ENCODE measurements at regions of chr16 and their contacts with region 1.

Region 1: GRCh38 chr16:88442727-88443576 is 10.1 kb upstream of the ZFPM1 start:
- DNase-seq: peak; percentile 67
- H3K4me3 Mint-ChIP-seq: no peak overlapping the region
- H3K27ac Mint-ChIP-seq: no peak overlapping the region
- H3K4me1 Mint-ChIP-seq: peaks cover 3% of the 10 kb centered on the region
- H3K27me3 Mint-ChIP-seq: peaks cover 7% of the 10 kb centered on the region

Region 2: GRCh38 chr16:88527186-88527936 is 84.4 kb after region 1 on chr16:
- intact Hi-C with region 1: loop called (anchors 1 kb)
- DNase-seq: peak; percentile 38
- H3K4me3 Mint-ChIP-seq: no peak overlapping the region
- H3K27ac Mint-ChIP-seq: no peak overlapping the region
- H3K4me1 Mint-ChIP-seq: no peaks in the 10 kb centered on the region
- H3K27me3 Mint-ChIP-seq: no peaks in the 10 kb centered on the region

Region 3: DNA sequence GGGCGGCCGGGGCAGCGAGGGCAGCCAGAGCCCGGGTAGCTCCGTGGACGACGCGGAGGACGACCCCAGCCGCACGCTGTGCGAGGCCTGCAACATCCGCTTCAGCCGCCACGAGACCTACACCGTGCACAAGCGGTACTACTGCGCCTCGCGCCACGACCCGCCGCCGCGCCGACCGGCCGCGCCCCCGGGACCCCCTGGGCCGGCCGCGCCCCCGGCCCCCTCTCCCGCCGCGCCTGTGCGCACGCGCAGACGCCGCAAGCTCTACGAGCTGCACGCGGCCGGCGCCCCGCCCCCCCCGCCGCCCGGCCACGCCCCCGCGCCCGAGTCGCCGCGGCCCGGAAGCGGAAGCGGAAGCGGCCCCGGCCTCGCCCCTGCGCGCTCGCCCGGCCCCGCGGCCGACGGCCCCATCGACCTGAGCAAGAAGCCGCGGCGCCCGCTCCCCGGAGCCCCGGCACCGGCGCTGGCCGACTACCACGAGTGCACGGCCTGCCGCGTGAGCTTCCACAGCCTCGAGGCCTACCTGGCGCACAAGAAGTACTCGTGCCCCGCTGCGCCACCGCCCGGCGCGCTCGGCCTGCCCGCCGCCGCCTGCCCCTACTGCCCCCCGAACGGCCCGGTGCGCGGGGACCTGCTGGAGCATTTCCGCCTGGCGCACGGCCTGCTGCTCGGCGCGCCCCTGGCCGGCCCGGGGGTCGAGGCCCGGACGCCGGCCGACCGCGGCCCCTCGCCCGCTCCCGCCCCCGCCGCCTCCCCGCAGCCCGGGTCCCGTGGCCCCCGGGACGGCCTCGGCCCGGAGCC is 91.2 kb after region 1 on chr16:
- intact Hi-C with region 1: loop called (anchors 2 kb)
- DNase-seq: peak; percentile 75
- H3K4me3 Mint-ChIP-seq: no peak overlapping the region
- H3K27ac Mint-ChIP-seq: no peak overlapping the region
- H3K4me1 Mint-ChIP-seq: peaks cover 3% of the 10 kb centered on the region
- H3K27me3 Mint-ChIP-seq: peaks cover 4% of the 10 kb centered on the region

Region 4: GRCh38 chr16:88561485-88562369 is 118.8 kb after region 1 on chr16:
- intact Hi-C with region 1: loop called (anchors 2 kb)
- DNase-seq: peak; percentile 25
- H3K4me3 Mint-ChIP-seq: no peak overlapping the region
- H3K27ac Mint-ChIP-seq: no peak overlapping the region
- H3K4me1 Mint-ChIP-seq: peaks cover 6% of the 10 kb centered on the region
- H3K27me3 Mint-ChIP-seq: no peaks in the 10 kb centered on the region